Naive thymus-derived CD4-positive, alpha-beta T cell (primary cell): ENCODE measurements at regions of chr15 and their contacts with region 1.

Region 1: GRCh38 chr15:64460206-64460734 is at the start of gene ZNF609:
- DNase-seq: peak; percentile 75 to 97 (median 85)
- ATAC-seq: peak; percentile 89
- H3K4me3 ChIP-seq: peak within 1 kb of the TSS; percentile 88
- H3K4me3 Mint-ChIP-seq: peak within 1 kb of the TSS; percentile 90 to 98 (median 94)
- H3K27ac ChIP-seq: peak within 1 kb of the TSS; percentile 70
- H3K27ac Mint-ChIP-seq: peak within 1 kb of the TSS; percentile 89 to 97 (median 92)
- H3K4me1 ChIP-seq: peaks cover 22 to 69% of the 10 kb centered on the region in 2 donors
- H3K4me1 Mint-ChIP-seq: peaks cover 61 to 91% (median 88%) of the 10 kb centered on the region in 7 donors
- H3K27me3 ChIP-seq: no peaks in the 10 kb centered on the region
- H3K27me3 Mint-ChIP-seq: no peaks in the 10 kb centered on the region
- total RNA-seq, gene ZNF609: 55.0 to 89.1 (median 78.3) TPM

Region 2: DNA sequence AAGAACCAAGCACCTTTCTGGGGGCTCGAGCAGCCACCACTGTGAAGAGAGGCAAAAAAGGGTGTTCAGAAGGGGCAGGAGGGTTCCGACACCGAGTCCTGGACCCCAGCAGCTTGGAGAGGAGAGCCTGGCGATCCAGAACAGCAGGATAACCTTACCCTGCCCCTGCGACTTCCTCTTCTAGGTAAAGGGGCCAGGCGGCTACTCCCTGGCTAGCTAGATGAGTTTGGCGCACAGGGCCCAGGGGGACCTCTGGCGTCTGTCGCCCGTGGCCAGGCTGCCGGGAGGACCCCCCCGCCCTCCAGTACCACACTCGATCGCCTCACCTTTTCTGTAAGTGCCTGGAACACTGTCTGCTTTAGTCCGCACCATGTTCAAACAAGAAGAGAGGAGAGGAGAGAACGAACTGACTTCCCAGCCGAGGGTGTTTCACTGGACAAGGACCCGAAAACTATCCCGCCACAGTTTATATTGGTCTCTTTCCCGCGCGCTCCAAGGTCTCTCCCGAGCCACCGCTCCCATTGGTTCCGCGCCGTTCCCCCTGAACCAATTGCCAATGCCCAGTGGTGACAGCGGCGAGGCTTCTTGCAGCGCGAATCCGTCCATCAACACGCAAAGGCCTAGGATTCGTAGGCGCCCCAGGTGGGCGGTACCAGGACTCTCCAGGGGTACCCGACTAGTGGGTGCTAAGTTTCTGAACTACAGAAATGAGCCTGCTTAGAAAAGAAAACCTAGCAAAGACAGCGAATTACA is 79.1 kb before region 1 on chr15 and contains the start of gene PCLAF:
- CTCF ChIA-PET with region 1: no interaction called
- POLR2A ChIA-PET with region 1: no interaction called
- intact Hi-C with region 1: loop called in 1 of 2 experiments (anchors 2 kb)
- DNase-seq: peak; percentile 72 to 91 (median 85)
- ATAC-seq: peak; percentile 100
- H3K4me3 ChIP-seq: peak within 1 kb of the TSS; percentile 66
- H3K4me3 Mint-ChIP-seq: peak within 1 kb of the TSS; percentile 79 to 97 (median 94)
- H3K27ac ChIP-seq: peak within 1 kb of the TSS; percentile 57
- H3K27ac Mint-ChIP-seq: peak within 1 kb of the TSS; percentile 11 to 88 (median 60)
- H3K4me1 ChIP-seq: peaks cover 0 to 4% of the 10 kb centered on the region in 2 donors
- H3K4me1 Mint-ChIP-seq: peaks cover 0 to 36% (median 9%) of the 10 kb centered on the region in 7 donors
- H3K27me3 ChIP-seq: no peaks in the 10 kb centered on the region
- H3K27me3 Mint-ChIP-seq: no peaks in the 10 kb centered on the region
- total RNA-seq, gene PCLAF: 0.85 to 58.7 (median 1.2) TPM

Region 3: DNA sequence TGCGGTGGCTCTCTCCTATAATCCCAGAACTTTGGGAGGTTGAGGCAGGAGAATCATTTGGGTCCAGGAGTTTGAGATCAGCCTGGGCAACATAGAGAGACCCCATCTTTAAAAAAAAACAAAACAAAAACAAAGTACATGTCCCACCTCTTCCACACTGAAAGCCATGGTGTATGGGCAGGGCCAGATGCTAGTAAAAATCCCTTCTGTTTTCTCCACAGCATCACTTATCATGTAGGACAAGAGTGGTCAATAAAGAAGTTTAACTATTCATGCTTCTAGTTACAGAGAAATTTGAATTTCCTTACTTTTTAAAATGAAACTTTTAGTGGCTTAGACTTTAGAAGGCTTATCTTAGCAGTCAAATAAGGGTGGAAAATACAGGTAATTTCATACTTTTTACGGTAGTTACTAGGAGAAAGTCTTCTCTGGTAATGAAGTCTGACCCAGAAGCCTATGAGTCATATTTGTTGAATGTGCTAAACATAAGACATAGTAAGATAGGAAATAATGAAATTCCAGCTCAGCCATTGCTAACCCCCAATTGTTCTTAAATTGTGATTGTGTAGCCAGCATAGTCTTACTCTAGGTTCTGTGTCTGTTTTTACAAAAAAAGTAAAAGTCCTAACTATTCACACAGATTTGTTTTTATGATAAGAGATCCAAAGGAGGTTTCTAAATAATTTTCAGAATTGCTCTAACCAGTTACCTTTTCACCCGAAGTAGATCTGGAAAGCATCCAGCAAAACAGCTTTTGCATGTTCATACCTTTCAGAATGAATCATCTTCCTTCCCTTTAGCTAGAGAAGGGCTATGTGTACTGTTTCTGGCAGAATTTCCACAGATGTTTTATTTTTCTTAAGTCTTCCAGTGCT is 16.3 kb before region 1 on chr15:
- CTCF ChIA-PET with region 1: no interaction called
- POLR2A ChIA-PET with region 1: interaction called, 7 read pairs
- intact Hi-C with region 1: loop called (anchors 1 to 2 kb)
- DNase-seq: peak in 1 of 9 donors; percentile 32
- ATAC-seq: no peak
- H3K4me3 ChIP-seq: no peak overlapping the region
- H3K4me3 Mint-ChIP-seq: peak overlapping the region in 9 of 10 donors; percentile 1 to 77 (median 59)
- H3K27ac ChIP-seq: peak overlapping the region; percentile 37
- H3K27ac Mint-ChIP-seq: peak overlapping the region; percentile 24 to 90 (median 82)
- H3K4me1 ChIP-seq: peaks cover 17 to 36% of the 10 kb centered on the region in 2 donors
- H3K4me1 Mint-ChIP-seq: peaks cover 28 to 79% (median 66%) of the 10 kb centered on the region in 7 donors
- H3K27me3 ChIP-seq: no peaks in the 10 kb centered on the region
- H3K27me3 Mint-ChIP-seq: no peaks in the 10 kb centered on the region

Region 4: DNA sequence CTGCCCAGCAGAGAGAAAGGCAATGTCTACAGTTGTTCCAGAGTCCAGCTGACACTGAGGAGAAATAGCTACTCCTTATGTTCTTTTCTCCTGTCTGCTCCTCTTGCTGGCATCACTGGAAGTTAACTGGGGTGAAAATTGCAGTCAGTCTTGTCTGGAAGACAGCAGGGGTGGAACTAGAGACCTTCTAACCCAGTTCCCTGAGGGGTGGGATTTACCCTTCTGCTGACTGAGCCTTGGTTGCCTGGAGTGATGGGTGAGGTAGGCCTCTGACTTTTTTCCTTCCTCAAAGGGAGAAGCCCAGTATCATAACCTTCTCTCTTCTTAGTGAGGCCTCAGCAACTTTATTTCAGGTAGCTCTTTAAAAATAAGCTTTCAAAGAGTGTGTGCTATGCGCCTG is 16.3 kb after region 1 on chr15:
- CTCF ChIA-PET with region 1: no interaction called
- POLR2A ChIA-PET with region 1: interaction called, 4 read pairs
- intact Hi-C with region 1: loop called in 1 of 2 experiments (anchors 2 kb)
- DNase-seq: peak in 1 of 9 donors; percentile 19
- ATAC-seq: peak; percentile 45
- H3K4me3 ChIP-seq: no peak overlapping the region
- H3K4me3 Mint-ChIP-seq: peak overlapping the region in 8 of 10 donors; percentile 32 to 57 (median 49)
- H3K27ac ChIP-seq: peak overlapping the region; percentile 10
- H3K27ac Mint-ChIP-seq: peak overlapping the region; percentile 21 to 90 (median 84)
- H3K4me1 ChIP-seq: peaks cover 0 to 6% of the 10 kb centered on the region in 2 donors
- H3K4me1 Mint-ChIP-seq: peaks cover 27 to 74% (median 60%) of the 10 kb centered on the region in 7 donors
- H3K27me3 ChIP-seq: no peaks in the 10 kb centered on the region
- H3K27me3 Mint-ChIP-seq: no peaks in the 10 kb centered on the region

Region 5: DNA sequence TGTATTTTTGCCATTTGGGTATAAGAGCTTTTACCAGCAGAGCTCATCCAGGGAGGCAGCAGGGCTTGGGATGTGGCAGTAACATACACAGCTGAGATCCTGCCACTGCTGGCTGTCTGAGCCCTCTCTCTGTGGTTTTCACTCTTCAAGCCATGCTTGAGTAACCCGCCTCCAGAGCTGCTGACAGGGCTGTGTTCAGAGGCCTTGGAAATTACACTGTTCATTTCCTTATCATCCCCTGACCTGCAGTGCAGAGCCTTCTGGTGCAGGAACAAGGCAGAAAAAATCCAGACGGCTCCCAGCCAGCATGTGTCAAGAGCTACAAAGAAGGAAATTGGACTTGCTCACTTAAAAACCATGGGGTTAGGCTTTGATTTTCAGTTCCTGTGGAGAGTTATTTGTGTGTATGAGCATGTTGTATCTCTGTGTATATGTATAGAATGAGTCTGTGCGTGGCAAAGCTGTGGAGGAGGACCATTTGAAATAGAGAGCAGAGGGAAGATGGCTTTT is 47.1 kb after region 1 on chr15:
- CTCF ChIA-PET with region 1: no interaction called
- POLR2A ChIA-PET with region 1: interaction called, 9 read pairs
- intact Hi-C with region 1: loop called (anchors 2 to 5 kb)
- DNase-seq: peak in 8 of 9 donors; percentile 14 to 46 (median 31)
- ATAC-seq: peak; percentile 76
- H3K4me3 ChIP-seq: peak overlapping the region; percentile 15
- H3K4me3 Mint-ChIP-seq: peak overlapping the region; percentile 25 to 79 (median 65)
- H3K27ac ChIP-seq: peak overlapping the region; percentile 46
- H3K27ac Mint-ChIP-seq: peak overlapping the region; percentile 43 to 97 (median 85)
- H3K4me1 ChIP-seq: peaks cover 27 to 88% of the 10 kb centered on the region in 2 donors
- H3K4me1 Mint-ChIP-seq: peaks cover 37 to 93% (median 81%) of the 10 kb centered on the region in 7 donors
- H3K27me3 ChIP-seq: no peaks in the 10 kb centered on the region
- H3K27me3 Mint-ChIP-seq: no peaks in the 10 kb centered on the region

Region 6: DNA sequence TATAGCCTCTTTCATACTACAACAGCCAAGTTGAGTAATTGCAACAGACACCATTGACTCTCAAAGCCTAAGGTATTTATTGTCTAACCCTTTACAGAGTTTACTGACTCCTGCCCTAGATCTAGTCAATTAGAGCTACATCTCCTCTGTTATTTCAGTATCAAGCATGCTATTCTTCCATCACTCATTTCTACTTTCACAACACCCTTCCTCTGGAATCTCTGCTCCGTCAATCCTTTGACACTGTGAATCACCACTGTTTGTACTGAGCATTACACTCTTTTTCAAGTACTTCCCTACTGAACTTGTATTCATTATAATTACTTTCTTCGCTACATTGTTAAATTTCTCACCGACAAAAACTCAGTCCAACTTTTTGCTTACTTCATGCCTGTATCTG is 121.9 kb after region 1 on chr15:
- CTCF ChIA-PET with region 1: no interaction called
- POLR2A ChIA-PET with region 1: no interaction called
- intact Hi-C with region 1: loop called in 1 of 2 experiments (anchors 5 kb)
- DNase-seq: no peak
- ATAC-seq: peak; percentile 41
- H3K4me3 ChIP-seq: no peak overlapping the region
- H3K4me3 Mint-ChIP-seq: peak overlapping the region in 8 of 10 donors; percentile 2 to 86 (median 28)
- H3K27ac ChIP-seq: no peak overlapping the region
- H3K27ac Mint-ChIP-seq: peak overlapping the region in 8 of 9 donors; percentile 4 to 93 (median 68)
- H3K4me1 ChIP-seq: peaks cover 0 to 28% of the 10 kb centered on the region in 2 donors
- H3K4me1 Mint-ChIP-seq: peaks cover 35 to 75% (median 65%) of the 10 kb centered on the region in 7 donors
- H3K27me3 ChIP-seq: no peaks in the 10 kb centered on the region
- H3K27me3 Mint-ChIP-seq: no peaks in the 10 kb centered on the region

Region 7: GRCh38 chr15:64634576-64635498 is 174.6 kb after region 1 on chr15:
- CTCF ChIA-PET with region 1: no interaction called
- POLR2A ChIA-PET with region 1: interaction called, 3 read pairs
- intact Hi-C with region 1: loop called in 1 of 2 experiments (anchors 5 kb)
- DNase-seq: peak in 1 of 9 donors; percentile 13
- ATAC-seq: peak; percentile 55
- H3K4me3 ChIP-seq: peak overlapping the region; percentile 5
- H3K4me3 Mint-ChIP-seq: peak overlapping the region; percentile 51 to 74 (median 68)
- H3K27ac ChIP-seq: peak overlapping the region; percentile 47
- H3K27ac Mint-ChIP-seq: peak overlapping the region; percentile 37 to 87 (median 82)
- H3K4me1 ChIP-seq: peaks cover 50 to 53% of the 10 kb centered on the region in 2 donors
- H3K4me1 Mint-ChIP-seq: peaks cover 51 to 86% (median 72%) of the 10 kb centered on the region in 7 donors
- H3K27me3 ChIP-seq: no peaks in the 10 kb centered on the region
- H3K27me3 Mint-ChIP-seq: no peaks in the 10 kb centered on the region

Region 8: GRCh38 chr15:64836023-64836536 is 375.8 kb after region 1 on chr15:
- CTCF ChIA-PET with region 1: no interaction called
- POLR2A ChIA-PET with region 1: no interaction called
- intact Hi-C with region 1: no loop called
- DNase-seq: no peak
- ATAC-seq: no peak
- H3K4me3 ChIP-seq: no peak overlapping the region
- H3K4me3 Mint-ChIP-seq: peak overlapping the region; percentile 16 to 80 (median 72)
- H3K27ac ChIP-seq: peak overlapping the region; percentile 38
- H3K27ac Mint-ChIP-seq: peak overlapping the region; percentile 44 to 91 (median 81)
- H3K4me1 ChIP-seq: peaks cover 37 to 43% of the 10 kb centered on the region in 2 donors
- H3K4me1 Mint-ChIP-seq: peaks cover 42 to 56% (median 52%) of the 10 kb centered on the region in 7 donors
- H3K27me3 ChIP-seq: no peaks in the 10 kb centered on the region
- H3K27me3 Mint-ChIP-seq: no peaks in the 10 kb centered on the region